ENCODE measurements at regions of chr1 and their contacts with region 1.

Region 1: GRCh38 chr1:26538480-26539412 is 9.2 kb downstream of the RPS6KA1 start:
- DNase-seq: peak; percentile 67
- H3K4me3 Mint-ChIP-seq: no peak overlapping the region
- H3K27ac Mint-ChIP-seq: no peak overlapping the region
- H3K4me1 Mint-ChIP-seq: peaks cover 11% of the 10 kb centered on the region
- H3K27me3 Mint-ChIP-seq: no peaks in the 10 kb centered on the region
- CTCF ChIP-seq: peak; percentile 40

Region 2: DNA sequence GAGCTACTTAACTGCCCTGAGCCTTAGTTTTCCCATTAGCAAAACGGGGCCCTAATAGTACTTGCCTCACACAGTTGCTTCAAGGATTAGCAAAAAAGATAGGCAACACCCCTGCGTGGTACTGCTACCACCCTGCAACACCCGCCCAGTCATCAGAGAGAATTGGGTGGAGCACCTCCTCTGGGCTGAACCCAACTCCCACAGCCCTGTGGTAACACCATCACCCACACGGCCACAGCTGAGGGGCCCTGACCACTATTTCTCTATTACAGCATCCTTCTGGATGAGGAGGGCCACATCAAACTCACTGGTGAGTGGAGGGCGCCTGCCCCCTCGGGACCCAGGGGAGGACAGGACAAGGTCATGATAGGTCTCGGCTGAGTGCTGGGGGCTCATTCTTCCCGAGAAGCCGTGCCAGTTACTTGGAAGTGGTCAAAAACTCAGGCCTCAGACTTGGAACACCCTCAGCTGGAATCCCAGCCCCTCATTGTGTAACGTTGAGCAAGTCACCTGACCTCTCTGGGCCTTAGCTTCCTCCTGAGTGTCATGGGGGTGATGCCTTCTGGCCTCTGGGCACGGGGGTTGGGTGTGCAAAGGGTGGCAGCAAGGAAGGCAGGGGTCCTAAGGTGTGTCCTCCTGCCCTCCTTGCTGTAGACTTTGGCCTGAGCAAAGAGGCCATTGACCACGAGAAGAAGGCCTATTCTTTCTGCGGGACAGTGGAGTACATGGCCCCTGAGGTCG is 15.4 kb after region 1 on chr1:
- CTCF ChIA-PET with region 1: interaction called, 13 read pairs
- POLR2A ChIA-PET with region 1: no interaction called
- intact Hi-C with region 1: no loop called
- DNase-seq: no peak
- H3K4me3 Mint-ChIP-seq: no peak overlapping the region
- H3K27ac Mint-ChIP-seq: no peak overlapping the region
- H3K4me1 Mint-ChIP-seq: no peaks in the 10 kb centered on the region
- H3K27me3 Mint-ChIP-seq: no peaks in the 10 kb centered on the region
- CTCF ChIP-seq: no peak

Region 3: DNA sequence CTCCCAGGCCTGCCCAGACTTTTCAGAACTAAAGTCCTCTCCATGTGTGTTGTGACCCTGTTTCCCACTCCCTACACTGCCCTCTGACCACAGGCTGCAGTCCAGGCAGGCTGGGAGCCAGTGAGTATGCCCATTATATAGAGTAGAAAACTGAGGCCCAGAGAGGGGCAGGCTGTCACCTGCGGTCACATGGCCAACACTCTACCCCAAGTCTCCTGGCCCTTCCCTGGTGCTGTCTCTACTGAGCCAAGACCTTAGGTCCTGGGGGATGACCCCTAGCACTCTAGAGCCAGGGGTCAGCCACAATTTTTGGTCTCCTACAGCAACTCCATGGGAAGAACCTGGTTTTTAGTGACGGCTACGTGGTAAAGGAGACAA is 21.6 kb after region 1 on chr1:
- CTCF ChIA-PET with region 1: interaction called, 13 read pairs
- POLR2A ChIA-PET with region 1: no interaction called
- intact Hi-C with region 1: no loop called
- DNase-seq: no peak
- H3K4me3 Mint-ChIP-seq: no peak overlapping the region
- H3K27ac Mint-ChIP-seq: peak overlapping the region; percentile 46
- H3K4me1 Mint-ChIP-seq: no peaks in the 10 kb centered on the region
- H3K27me3 Mint-ChIP-seq: no peaks in the 10 kb centered on the region
- CTCF ChIP-seq: no peak

Region 4: GRCh38 chr1:26780344-26780957 is 241.7 kb after region 1 on chr1:
- CTCF ChIA-PET with region 1: interaction called, 11 read pairs
- POLR2A ChIA-PET with region 1: no interaction called
- intact Hi-C with region 1: no loop called
- DNase-seq: no peak
- H3K4me3 Mint-ChIP-seq: no peak overlapping the region
- H3K27ac Mint-ChIP-seq: no peak overlapping the region
- H3K4me1 Mint-ChIP-seq: peaks cover 22% of the 10 kb centered on the region
- H3K27me3 Mint-ChIP-seq: no peaks in the 10 kb centered on the region
- CTCF ChIP-seq: no peak

Measured in MCF 10A (cell line).